Activated CD4-positive, alpha-beta T cell treated with anti-CD3 and anti-CD28 coated beads, Interleukin-2, amount 10 ng/mL, durations not matched to agents 24 days and 14 days (primary cell): ENCODE measurements at regions of chr1 and their contacts with region 1.

Region 1: DNA sequence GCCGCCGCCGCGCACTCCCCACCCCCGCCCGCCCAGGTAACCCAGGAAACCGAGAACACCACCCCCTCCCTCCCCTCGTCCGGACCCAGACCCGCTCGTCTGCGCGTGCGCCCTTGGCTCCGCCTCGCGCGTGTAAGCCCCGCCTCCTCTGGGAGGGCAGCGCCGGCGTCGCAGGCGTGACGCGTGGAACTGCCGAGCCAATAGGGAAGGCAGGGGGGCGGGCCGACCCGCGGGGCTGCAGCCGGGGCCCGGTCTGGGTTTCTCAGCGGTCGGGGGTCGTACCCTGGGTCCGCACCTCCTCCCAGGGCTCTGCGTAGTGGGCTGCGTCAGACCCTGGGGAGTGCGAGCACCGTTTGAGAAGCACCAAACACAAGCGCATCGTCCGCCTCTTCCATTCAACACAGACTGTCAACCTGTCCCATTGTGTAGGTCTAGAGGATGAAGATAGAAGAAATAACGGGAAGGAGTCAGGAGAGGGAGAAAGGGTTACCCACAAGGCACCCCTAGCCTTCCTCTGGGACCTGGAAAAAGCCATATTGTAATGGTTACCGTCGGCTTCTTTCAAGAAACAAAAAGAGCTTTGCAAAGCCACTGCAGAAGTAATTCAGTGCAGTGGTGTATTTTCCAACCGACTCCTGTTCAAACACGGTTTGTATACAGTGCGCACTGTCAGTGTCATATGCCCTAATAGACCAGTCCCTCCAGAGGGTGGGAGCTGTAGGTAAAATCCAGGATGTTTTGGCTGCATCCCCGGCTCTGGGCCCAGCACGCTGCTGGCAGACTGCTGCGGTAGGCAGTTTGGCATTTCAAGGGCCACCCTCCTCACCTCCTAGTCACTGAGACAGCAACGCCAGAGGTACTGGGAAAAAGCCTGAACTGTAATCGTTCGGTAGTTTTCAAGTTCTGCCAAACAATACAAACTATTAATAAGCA is 473 bp upstream of the LYST start:
- DNase-seq: peak; percentile 100
- H3K4me3 Mint-ChIP-seq: peak overlapping the region; percentile 99
- H3K27ac Mint-ChIP-seq: peak overlapping the region; percentile 100
- H3K4me1 Mint-ChIP-seq: peaks cover 52% of the 10 kb centered on the region
- H3K27me3 Mint-ChIP-seq: no peaks in the 10 kb centered on the region

Region 2: GRCh38 chr1:234599617-234600417 is 1267.4 kb before region 1 on chr1:
- intact Hi-C with region 1: loop called (anchors 10 kb)
- DNase-seq: peak; percentile 92
- H3K4me3 Mint-ChIP-seq: peak overlapping the region; percentile 89
- H3K27ac Mint-ChIP-seq: peak overlapping the region; percentile 97
- H3K4me1 Mint-ChIP-seq: peaks cover 47% of the 10 kb centered on the region
- H3K27me3 Mint-ChIP-seq: no peaks in the 10 kb centered on the region

Region 3: GRCh38 chr1:235642011-235642942 is 224.9 kb before region 1 on chr1:
- intact Hi-C with region 1: loop called (anchors 2 kb)
- DNase-seq: peak; percentile 93
- H3K4me3 Mint-ChIP-seq: peak overlapping the region; percentile 87
- H3K27ac Mint-ChIP-seq: peak overlapping the region; percentile 99
- H3K4me1 Mint-ChIP-seq: peaks cover 64% of the 10 kb centered on the region
- H3K27me3 Mint-ChIP-seq: peaks cover 23% of the 10 kb centered on the region

Region 4: GRCh38 chr1:235855811-235856429 is 11.3 kb before region 1 on chr1:
- intact Hi-C with region 1: loop called (anchors 1 kb)
- DNase-seq: no peak
- H3K4me3 Mint-ChIP-seq: no peak overlapping the region
- H3K27ac Mint-ChIP-seq: peak overlapping the region; percentile 56
- H3K4me1 Mint-ChIP-seq: peaks cover 32% of the 10 kb centered on the region
- H3K27me3 Mint-ChIP-seq: no peaks in the 10 kb centered on the region

Region 5: DNA sequence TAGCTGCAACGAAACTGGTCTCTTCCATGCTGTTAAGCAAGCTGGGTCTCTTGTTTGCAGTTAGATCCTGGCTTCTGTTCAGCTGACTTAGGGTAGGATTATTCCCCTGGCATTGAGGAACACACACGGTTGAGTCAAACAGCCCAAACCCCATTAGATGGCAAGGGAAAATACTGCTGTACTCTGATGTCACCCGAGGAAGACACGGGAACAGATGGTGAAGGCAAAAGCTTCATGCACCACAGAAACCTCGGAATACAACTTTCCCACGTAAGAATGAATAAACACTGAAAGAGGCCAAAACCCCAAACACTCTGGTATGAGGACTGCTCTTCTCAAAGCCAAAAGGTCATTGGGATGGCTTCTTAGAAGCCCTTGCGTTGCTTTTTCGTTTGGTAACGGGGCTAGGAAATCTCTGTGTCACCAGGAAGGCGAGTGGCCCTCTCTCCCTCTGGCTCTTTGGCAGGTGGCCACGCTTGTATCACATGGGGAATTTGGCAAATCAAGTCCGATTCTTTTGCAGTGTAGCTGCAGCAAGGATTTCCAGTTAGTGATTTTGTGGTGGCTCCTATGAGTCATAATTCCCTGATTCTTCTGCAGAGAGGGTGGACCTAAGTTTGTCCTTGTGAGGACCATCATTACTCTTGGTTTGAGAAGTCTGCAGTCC is 16.2 kb after region 1 on chr1:
- intact Hi-C with region 1: loop called (anchors 1 kb)
- DNase-seq: no peak
- H3K4me3 Mint-ChIP-seq: peak overlapping the region; percentile 65
- H3K27ac Mint-ChIP-seq: peak overlapping the region; percentile 79
- H3K4me1 Mint-ChIP-seq: peaks cover 57% of the 10 kb centered on the region
- H3K27me3 Mint-ChIP-seq: no peaks in the 10 kb centered on the region

Region 6: DNA sequence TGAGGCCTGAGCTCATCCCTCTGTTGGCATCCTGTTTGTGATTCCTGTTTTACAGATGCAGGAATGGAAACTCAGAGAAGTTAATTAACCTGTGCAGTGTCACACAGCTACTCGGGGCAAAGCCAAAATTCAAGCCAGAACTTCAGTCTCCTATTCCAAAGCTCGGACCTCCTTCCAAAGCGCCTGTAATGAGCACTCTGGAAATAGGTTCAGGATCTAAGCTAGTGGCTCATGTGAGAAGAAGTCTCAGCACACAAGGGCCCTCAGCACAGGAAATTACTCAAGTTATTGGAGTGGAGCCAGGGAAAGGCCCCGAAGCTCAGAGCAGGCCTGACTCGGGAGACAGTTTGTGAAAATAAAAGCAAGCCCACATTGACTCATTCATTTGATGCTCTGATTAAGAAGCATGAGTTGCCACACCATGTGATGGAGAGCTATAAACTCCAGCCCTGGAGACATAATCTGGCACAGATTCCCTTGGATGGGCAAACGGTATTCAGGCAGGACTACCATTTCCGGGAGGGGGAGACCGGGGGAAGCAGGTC is 50.2 kb after region 1 on chr1:
- intact Hi-C with region 1: loop called (anchors 1 kb)
- DNase-seq: peak; percentile 78
- H3K4me3 Mint-ChIP-seq: peak overlapping the region; percentile 39
- H3K27ac Mint-ChIP-seq: peak overlapping the region; percentile 82
- H3K4me1 Mint-ChIP-seq: peaks cover 31% of the 10 kb centered on the region
- H3K27me3 Mint-ChIP-seq: no peaks in the 10 kb centered on the region

Region 7: GRCh38 chr1:235971571-235972310 is 104.6 kb after region 1 on chr1:
- intact Hi-C with region 1: loop called (anchors 1 kb)
- DNase-seq: peak; percentile 96
- H3K4me3 Mint-ChIP-seq: peak overlapping the region; percentile 77
- H3K27ac Mint-ChIP-seq: peak overlapping the region; percentile 85
- H3K4me1 Mint-ChIP-seq: peaks cover 16% of the 10 kb centered on the region
- H3K27me3 Mint-ChIP-seq: peaks cover 6% of the 10 kb centered on the region